Panc1 (cell line): ENCODE measurements at regions of chr17 and their contacts with region 1.

Region 1: GRCh38 chr17:50200457-50201275 is 765 bp downstream of the COL1A1 start:
- DNase-seq: peak; percentile 55
- ATAC-seq: peak; percentile 88
- H3K4me3 ChIP-seq: peak overlapping the region; percentile 54 to 75
- H3K27ac ChIP-seq: peak overlapping the region; percentile 71; the same call in 1 of the 2 replicates
- H3K4me1 ChIP-seq: peaks cover 11% of the 10 kb centered on the region
- H3K27me3 ChIP-seq: peaks cover 6% of the 10 kb centered on the region; the same call in 1 of the 2 replicates
- CTCF ChIP-seq: peak; percentile 100

Region 2: GRCh38 chr17:49899191-49899485 is 301.5 kb before region 1 on chr17:
- CTCF ChIA-PET with region 1: no interaction called
- POLR2A ChIA-PET with region 1: no interaction called
- in situ Hi-C with region 1: no loop called
- intact Hi-C with region 1: no loop called
- DNase-seq: no peak
- ATAC-seq: peak; percentile 67
- H3K4me3 ChIP-seq: no peak overlapping the region
- H3K27ac ChIP-seq: no peak overlapping the region
- H3K4me1 ChIP-seq: peaks cover 6% of the 10 kb centered on the region; the same call in 1 of the 2 replicates
- H3K27me3 ChIP-seq: peaks cover 13% of the 10 kb centered on the region
- CTCF ChIP-seq: no peak; the same call in 1 of the 2 replicates

Region 3: DNA sequence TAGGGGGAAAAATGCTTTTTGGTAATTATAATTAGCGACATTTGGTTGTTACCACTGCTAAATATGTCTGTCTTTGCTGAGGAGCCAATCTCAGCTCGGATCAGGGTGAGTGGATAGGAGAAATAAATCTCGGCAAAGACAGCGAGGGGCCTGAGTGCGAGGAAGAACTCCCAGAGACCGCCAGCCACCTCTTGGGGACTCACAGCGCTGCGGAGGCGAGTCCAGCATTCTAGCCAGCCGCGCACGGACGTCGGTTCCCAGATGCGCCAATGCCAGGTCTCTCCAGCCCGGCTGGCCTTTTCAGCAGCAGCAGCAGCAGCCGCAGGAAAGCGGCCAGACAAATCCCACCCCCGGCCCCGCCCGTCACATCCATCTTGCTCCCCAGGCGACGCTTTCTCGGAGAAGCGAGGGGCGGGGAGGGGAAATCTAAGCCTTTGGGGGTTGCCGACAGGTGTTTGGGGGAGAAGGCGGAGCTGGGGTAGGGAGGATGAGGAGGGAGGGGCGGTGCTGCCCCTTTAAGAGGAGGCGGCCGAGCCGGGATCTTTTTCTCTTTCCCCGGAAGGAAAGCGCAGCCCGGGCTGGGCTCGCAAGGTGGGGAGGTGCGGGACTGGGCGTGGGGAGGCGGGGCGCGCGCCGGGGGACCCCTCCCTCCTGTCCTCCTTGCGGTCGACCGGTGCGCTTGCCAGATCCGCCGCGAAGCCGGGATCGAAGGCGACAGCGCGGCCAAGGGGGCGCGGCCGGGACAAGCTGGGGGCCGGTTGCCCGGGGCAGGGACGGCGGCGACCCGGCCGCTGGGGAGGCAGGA is 145.0 kb before region 1 on chr17 and contains the start of gene ITGA3:
- CTCF ChIA-PET with region 1: interaction called, 12 read pairs
- POLR2A ChIA-PET with region 1: no interaction called
- in situ Hi-C with region 1: no loop called
- intact Hi-C with region 1: no loop called
- DNase-seq: no peak
- ATAC-seq: peak; percentile 69
- H3K4me3 ChIP-seq: peak within 1 kb of the TSS; percentile 63 to 99
- H3K27ac ChIP-seq: peak within 1 kb of the TSS; percentile 99
- H3K4me1 ChIP-seq: peaks cover 69% of the 10 kb centered on the region
- H3K27me3 ChIP-seq: no peaks in the 10 kb centered on the region
- CTCF ChIP-seq: no peak
- total RNA-seq, gene ITGA3: 439 TPM

Region 4: DNA sequence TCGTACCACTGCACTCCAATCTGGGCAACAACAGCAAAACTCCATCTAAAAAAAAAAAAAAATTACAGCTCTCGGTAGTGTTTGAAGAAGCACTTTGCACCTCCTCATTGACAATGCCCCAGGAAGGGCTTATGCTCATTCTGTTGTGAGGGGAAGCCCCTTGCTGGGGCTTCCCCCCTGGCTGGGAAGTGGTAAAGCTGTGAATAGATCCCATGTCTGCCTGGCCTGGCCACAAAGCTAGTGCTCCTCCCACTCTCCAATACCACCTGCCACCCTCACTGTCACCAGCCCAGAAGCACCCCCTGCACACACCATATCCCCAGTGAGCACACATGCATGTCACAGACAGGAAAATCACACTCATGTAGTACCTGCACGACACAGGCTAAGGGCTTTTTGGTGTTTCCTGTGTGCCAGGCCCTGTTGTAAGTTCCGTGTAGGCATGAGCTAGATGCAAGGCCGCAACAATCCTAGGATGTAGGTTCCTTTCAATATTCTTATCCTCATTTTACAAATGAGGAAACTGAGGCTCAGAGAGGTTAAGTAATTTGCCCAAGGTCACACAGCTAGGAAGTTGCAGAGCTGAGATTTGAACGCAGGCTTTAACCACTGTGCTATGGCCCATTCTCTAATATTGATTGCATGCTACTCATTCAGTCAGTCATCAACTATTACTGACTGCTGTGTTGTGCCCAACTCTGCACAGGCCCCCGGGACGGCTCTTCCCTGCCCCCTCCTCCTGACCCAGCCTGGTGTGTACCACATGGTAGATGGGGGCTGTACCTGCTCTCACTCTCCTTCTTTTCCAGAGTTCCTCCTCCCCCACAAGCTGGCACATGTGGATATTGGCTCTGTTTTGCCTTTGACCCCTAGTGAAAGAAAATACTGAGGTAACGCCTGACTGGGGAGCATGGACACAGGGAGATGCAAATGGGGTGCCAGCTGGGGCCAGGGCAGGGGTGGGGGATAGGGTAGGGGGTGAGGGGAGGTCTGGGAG is 12.7 kb after region 1 on chr17:
- CTCF ChIA-PET with region 1: interaction called, 21 read pairs
- POLR2A ChIA-PET with region 1: no interaction called
- in situ Hi-C with region 1: no loop called
- intact Hi-C with region 1: no loop called
- DNase-seq: no peak
- ATAC-seq: peak; percentile 49; the same call in 1 of the 2 replicates
- H3K4me3 ChIP-seq: no peak overlapping the region
- H3K27ac ChIP-seq: no peak overlapping the region
- H3K4me1 ChIP-seq: peaks cover 20% of the 10 kb centered on the region
- H3K27me3 ChIP-seq: no peaks in the 10 kb centered on the region
- CTCF ChIP-seq: no peak; the same call in 1 of the 2 replicates

Region 5: GRCh38 chr17:50269477-50270434 is 69.1 kb after region 1 on chr17:
- CTCF ChIA-PET with region 1: interaction called, 35 read pairs
- POLR2A ChIA-PET with region 1: no interaction called
- in situ Hi-C with region 1: no loop called
- intact Hi-C with region 1: loop called (anchors 1 kb)
- DNase-seq: peak; percentile 57
- ATAC-seq: peak; percentile 75
- H3K4me3 ChIP-seq: no peak overlapping the region
- H3K27ac ChIP-seq: no peak overlapping the region
- H3K4me1 ChIP-seq: peaks cover 38% of the 10 kb centered on the region
- H3K27me3 ChIP-seq: no peaks in the 10 kb centered on the region
- CTCF ChIP-seq: peak; percentile 93

Region 6: GRCh38 chr17:50297407-50297865 is 96.8 kb after region 1 on chr17:
- CTCF ChIA-PET with region 1: interaction called, 47 read pairs
- POLR2A ChIA-PET with region 1: interaction called, 3 read pairs
- in situ Hi-C with region 1: no loop called
- intact Hi-C with region 1: loop called (anchors 1 kb)
- DNase-seq: peak; percentile 42
- ATAC-seq: peak; percentile 97
- H3K4me3 ChIP-seq: no peak overlapping the region
- H3K27ac ChIP-seq: no peak overlapping the region
- H3K4me1 ChIP-seq: no peaks in the 10 kb centered on the region
- H3K27me3 ChIP-seq: no peaks in the 10 kb centered on the region
- CTCF ChIP-seq: peak; percentile 97

Region 7: GRCh38 chr17:50372758-50373556 is 172.3 kb after region 1 on chr17 and contains the starts of genes EME1 and MRPL27:
- CTCF ChIA-PET with region 1: interaction called, 19 read pairs
- POLR2A ChIA-PET with region 1: no interaction called
- in situ Hi-C with region 1: no loop called
- intact Hi-C with region 1: no loop called
- DNase-seq: peak; percentile 80
- ATAC-seq: peak; percentile 98
- H3K4me3 ChIP-seq: peak within 1 kb of the TSS; percentile 53 to 95
- H3K27ac ChIP-seq: peak within 1 kb of the TSS; percentile 86
- H3K4me1 ChIP-seq: peaks cover 5% of the 10 kb centered on the region
- H3K27me3 ChIP-seq: no peaks in the 10 kb centered on the region
- CTCF ChIP-seq: no peak
- total RNA-seq, gene EME1: 15.3 TPM
- total RNA-seq, gene MRPL27: 136 TPM